ENCODE measurements at regions of chr16 and their contacts with region 1.

Region 1: DNA sequence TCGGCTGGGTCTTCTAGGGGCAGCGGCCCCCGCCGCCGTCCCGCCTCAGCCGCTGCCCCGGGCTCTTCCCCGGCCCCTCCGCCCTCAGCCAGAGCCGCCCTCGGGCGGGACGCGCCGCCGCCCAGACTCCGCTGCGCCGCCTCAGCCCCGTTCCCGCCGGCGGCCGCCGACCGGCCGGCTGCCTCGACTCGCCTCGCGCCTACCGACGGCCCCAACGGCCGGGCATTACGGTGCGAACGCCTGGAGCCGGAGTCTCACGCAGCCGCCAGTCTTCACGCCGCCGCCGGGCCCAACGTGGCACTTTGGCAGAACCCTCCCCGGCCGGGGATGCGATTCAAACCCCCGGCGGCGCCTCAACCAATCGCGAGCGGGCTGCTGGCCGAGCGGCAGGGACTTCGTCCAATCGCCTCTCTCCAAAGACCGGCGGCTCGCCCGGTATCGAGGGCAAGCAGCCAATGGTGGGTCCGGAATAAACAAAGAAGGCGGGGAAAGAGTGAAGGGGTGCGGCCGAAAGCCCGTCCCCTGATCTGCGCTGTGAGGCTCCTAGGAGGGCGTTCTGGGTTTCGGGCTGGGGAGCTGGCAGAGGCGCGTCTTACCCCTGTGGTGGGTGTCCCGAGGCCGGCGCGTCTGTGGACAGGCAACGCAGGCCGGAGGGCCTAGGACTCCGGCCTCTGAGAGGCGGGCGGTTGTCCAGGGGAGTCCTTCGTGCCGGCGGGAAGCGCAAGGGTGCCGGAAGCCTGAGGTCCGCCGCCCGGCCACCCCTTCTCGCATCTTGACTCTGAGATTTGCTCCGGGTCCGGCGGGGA is at the start of gene CDR2:
- DNase-seq: peak; percentile 99
- ATAC-seq: peak; percentile 95
- H3K4me3 Mint-ChIP-seq: peak within 1 kb of the TSS; percentile 97
- H3K27ac Mint-ChIP-seq: peak within 1 kb of the TSS; percentile 95
- H3K4me1 Mint-ChIP-seq: peaks cover 38% of the 10 kb centered on the region
- H3K27me3 Mint-ChIP-seq: no peaks in the 10 kb centered on the region
- total RNA-seq, gene CDR2: 29.5 to 33.7 TPM

Region 2: GRCh38 chr16:20806168-20807050 is 1568.1 kb before region 1 on chr16 and contains the starts of genes ERI2 and REXO5:
- CTCF ChIA-PET with region 1: no interaction called
- POLR2A ChIA-PET with region 1: no interaction called
- intact Hi-C with region 1: loop called in 1 of 2 experiments (anchors 10 kb)
- DNase-seq: peak; percentile 86
- ATAC-seq: peak; percentile 87
- H3K4me3 Mint-ChIP-seq: peak within 1 kb of the TSS; percentile 79
- H3K27ac Mint-ChIP-seq: peak within 1 kb of the TSS; percentile 97
- H3K4me1 Mint-ChIP-seq: peaks cover 18% of the 10 kb centered on the region
- H3K27me3 Mint-ChIP-seq: no peaks in the 10 kb centered on the region
- total RNA-seq, gene ERI2: 17.6 to 19.8 TPM
- total RNA-seq, gene REXO5: 17.9 to 20.4 TPM

Region 3: DNA sequence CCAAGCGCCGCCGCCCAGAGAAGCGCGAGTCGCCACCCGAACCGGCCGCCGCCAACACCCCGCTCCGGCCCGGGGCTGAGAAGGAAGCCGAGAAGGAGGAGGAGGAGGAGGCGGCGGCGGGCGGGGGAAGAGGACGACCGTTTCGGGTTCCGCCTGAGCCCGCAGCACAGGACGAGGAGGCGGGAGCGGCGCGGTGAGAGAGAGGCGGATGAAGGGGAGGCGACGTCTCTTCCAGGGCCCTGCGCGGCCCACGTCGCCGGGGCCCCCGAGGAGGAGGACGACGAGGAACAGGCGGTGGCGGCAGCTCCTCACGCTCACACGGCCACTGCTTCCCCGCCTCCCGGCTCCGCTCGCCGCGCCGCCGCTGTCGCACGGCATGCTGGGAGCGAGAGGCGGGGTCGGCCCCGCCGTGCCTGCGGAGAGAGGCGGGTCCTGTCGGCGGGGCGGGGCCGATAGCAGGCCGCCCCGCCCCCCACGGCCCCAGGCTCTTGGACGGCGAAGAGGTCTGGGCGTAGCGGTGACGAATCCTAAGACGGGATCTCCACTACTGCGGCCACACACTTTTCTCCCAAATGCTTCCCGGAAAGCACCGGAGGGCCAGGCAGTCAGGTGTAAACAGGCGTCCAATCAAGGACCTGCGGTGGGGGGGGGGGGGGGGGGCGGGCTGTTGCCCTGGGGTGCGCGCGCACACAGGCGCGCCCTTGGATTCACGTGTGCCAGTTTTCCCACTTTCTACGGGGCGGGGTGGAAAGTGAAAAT is 872.4 kb before region 1 on chr16:
- CTCF ChIA-PET with region 1: no interaction called
- POLR2A ChIA-PET with region 1: no interaction called
- intact Hi-C with region 1: loop called in 1 of 2 experiments (anchors 10 kb)
- DNase-seq: peak; percentile 97
- ATAC-seq: peak; percentile 75
- H3K4me3 Mint-ChIP-seq: peak overlapping the region; percentile 83
- H3K27ac Mint-ChIP-seq: peak overlapping the region; percentile 93
- H3K4me1 Mint-ChIP-seq: peaks cover 24% of the 10 kb centered on the region
- H3K27me3 Mint-ChIP-seq: no peaks in the 10 kb centered on the region

Region 4: GRCh38 chr16:22285080-22285479 is 89.4 kb before region 1 on chr16:
- CTCF ChIA-PET with region 1: no interaction called
- POLR2A ChIA-PET with region 1: no interaction called
- intact Hi-C with region 1: no loop called
- DNase-seq: no peak
- ATAC-seq: no peak
- H3K4me3 Mint-ChIP-seq: no peak overlapping the region
- H3K27ac Mint-ChIP-seq: no peak overlapping the region
- H3K4me1 Mint-ChIP-seq: no peaks in the 10 kb centered on the region
- H3K27me3 Mint-ChIP-seq: no peaks in the 10 kb centered on the region

Region 5: GRCh38 chr16:22321339-22322001 is 53.0 kb before region 1 on chr16:
- CTCF ChIA-PET with region 1: interaction called, 5 read pairs
- POLR2A ChIA-PET with region 1: interaction called, 7 read pairs
- intact Hi-C with region 1: loop called (anchors 1 to 5 kb)
- DNase-seq: peak; percentile 86
- ATAC-seq: peak; percentile 89
- H3K4me3 Mint-ChIP-seq: no peak overlapping the region
- H3K27ac Mint-ChIP-seq: peak overlapping the region; percentile 60
- H3K4me1 Mint-ChIP-seq: peaks cover 4% of the 10 kb centered on the region
- H3K27me3 Mint-ChIP-seq: no peaks in the 10 kb centered on the region

Region 6: DNA sequence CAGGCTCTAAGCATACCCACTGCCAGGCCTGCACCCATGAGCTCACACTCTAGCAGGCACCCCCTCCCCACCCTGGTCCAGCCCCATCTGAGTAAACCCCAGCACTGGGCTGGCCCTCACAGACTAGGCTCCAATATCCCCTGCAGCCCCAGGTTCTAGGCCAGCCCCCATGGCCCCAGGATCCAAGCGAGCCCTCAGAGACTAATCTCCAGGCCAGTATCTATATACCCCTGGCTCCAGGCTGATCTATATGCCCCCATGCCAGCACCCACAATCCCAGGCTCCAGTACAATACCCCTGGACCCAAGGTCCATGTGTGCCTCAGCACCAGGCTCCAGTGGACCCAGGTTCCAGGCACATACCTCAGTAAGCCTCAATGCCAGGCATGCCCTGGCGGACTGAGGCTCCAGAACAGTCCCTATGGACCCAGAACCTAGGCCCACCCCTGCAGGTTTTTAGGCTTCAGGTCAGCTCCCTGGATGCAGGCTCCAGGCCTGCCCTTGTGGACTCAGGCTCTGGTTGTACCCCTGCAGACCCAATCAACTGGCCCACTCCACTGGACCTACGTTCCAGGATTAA is 38.8 kb before region 1 on chr16:
- CTCF ChIA-PET with region 1: no interaction called
- POLR2A ChIA-PET with region 1: no interaction called
- intact Hi-C with region 1: loop called in 1 of 2 experiments (anchors 5 kb)
- DNase-seq: no peak
- ATAC-seq: no peak
- H3K4me3 Mint-ChIP-seq: no peak overlapping the region
- H3K27ac Mint-ChIP-seq: no peak overlapping the region
- H3K4me1 Mint-ChIP-seq: peaks cover 15% of the 10 kb centered on the region
- H3K27me3 Mint-ChIP-seq: no peaks in the 10 kb centered on the region

Region 7: DNA sequence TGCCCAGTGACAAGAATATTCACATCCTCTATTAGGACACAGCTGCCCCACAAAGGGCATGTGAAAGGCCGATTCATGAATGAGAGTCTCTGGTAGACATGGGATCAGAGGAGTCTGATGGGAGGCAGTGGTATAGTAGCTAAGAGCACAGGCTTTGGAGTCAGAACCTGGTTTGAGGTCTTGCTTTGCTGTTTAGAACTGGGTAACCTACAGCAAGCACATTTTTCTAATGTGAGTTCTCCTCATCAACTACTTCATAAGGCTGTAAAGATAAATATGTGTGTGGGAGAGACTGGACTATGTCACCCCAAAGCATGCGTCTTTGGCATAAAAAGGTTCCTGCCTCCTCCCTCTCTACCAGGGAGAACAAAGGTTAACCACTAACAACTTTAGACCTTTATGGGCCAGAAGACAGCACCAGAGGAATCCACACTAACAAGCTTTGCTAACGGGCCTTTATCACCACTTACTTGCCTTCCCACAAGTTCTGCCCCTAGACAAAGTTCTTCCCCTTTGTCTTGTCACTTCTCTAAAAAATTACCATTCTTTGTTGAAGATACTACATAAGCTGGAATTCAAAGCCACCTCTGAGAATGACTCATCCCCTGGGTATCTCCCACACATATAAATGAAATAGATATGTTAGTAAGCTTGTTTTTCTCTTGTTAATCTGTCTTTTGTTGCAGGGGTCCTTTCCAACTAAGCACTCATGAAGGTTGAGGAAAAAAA is 21.2 kb before region 1 on chr16:
- CTCF ChIA-PET with region 1: interaction called, 11 read pairs
- POLR2A ChIA-PET with region 1: interaction called, 14 read pairs
- intact Hi-C with region 1: loop called (anchors 1 to 2 kb)
- DNase-seq: no peak
- ATAC-seq: peak; percentile 76
- H3K4me3 Mint-ChIP-seq: no peak overlapping the region
- H3K27ac Mint-ChIP-seq: peak overlapping the region; percentile 90
- H3K4me1 Mint-ChIP-seq: peaks cover 62% of the 10 kb centered on the region
- H3K27me3 Mint-ChIP-seq: no peaks in the 10 kb centered on the region

Region 8: GRCh38 chr16:22425036-22425801 is 50.7 kb after region 1 on chr16:
- CTCF ChIA-PET with region 1: no interaction called
- POLR2A ChIA-PET with region 1: no interaction called
- intact Hi-C with region 1: loop called in 1 of 2 experiments (anchors 10 kb)
- DNase-seq: no peak
- ATAC-seq: no peak
- H3K4me3 Mint-ChIP-seq: no peak overlapping the region
- H3K27ac Mint-ChIP-seq: peak overlapping the region; percentile 8
- H3K4me1 Mint-ChIP-seq: no peaks in the 10 kb centered on the region
- H3K27me3 Mint-ChIP-seq: no peaks in the 10 kb centered on the region